PC-9 (cell line): ENCODE measurements at regions of chr18 and their contacts with region 1.

Region 1: DNA sequence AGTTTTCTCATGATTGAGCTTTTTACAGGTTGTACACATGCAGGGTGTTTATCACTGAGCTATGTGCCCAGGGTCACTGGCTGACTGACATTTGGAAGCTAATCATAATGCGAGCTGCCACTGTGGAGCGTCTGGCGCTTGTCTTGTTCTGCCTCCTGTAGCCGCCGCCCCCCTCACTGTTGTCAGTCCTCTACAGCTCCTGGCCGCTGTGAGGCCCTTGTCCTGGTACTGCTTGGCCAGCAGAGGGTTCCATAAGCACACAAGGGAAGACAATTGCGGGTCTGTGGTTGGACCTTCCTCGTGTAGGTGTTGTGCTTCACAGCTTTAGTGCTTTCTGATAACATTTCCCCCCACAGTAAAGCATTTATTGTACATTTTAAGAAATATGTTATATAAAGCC is 105.6 kb upstream of the LDLRAD4 start:
- DNase-seq: no peak
- H3K4me3 ChIP-seq: no peak overlapping the region
- H3K27ac ChIP-seq: no peak overlapping the region
- H3K4me1 ChIP-seq: no peaks in the 10 kb centered on the region
- H3K27me3 ChIP-seq: no peaks in the 10 kb centered on the region
- CTCF ChIP-seq: no peak

Region 2: DNA sequence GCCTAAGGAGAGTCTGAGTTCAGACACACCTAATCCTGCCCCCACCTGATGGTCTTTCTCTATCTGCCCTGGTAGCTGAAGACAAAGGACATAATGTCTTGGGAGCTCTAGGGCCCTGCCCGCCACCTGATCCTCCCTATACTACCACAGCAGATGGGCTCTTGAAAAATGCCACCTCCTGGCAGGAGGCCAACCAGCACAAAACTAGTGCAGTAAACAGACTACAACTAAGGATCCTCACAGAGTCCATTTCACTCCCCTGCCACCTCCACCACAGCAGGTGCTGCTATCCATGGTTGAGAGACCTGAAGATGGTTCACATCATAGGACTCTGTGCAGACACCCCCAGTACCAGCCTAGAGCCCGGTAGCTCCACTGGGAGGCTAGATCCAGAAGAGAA is 53.0 kb after region 1 on chr18:
- CTCF ChIA-PET with region 1: no interaction called
- POLR2A ChIA-PET with region 1: no interaction called
- intact Hi-C with region 1: loop called (anchors 10 kb)
- DNase-seq: no peak
- H3K4me3 ChIP-seq: no peak overlapping the region
- H3K27ac ChIP-seq: no peak overlapping the region
- H3K4me1 ChIP-seq: no peaks in the 10 kb centered on the region
- H3K27me3 ChIP-seq: peaks cover 23% of the 10 kb centered on the region
- CTCF ChIP-seq: no peak

Region 3: DNA sequence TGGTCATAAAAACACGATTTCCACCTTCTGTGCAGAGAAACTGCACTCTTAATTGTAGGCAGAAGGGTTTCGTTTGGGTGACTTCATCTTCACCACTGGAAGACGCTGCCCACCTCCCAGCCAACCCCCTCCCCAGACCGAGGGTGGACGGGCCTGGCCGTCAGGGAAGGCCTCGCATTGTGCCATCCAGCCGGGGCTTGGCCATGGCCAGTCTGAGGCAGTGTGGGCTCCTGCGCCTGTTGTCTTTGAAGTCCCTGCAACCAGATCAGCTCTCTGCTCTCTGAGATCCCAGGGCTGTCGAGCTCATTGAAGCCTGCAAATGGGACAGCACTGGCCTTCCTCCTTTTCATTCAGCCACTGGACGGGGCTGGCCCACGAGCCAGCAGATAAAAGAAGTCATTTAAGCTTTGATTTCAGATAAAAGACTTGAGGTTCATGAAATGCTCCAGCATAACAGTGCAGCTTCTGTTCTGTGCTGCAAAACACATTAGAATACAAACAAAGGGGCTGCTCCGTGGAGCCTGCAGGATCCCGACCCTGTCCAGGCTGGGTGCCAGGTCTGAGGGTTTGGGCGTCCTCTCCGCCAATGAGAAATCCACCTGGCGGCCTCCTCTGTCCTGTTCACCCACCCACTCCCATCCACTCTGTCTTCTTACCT is 359.1 kb after region 1 on chr18:
- CTCF ChIA-PET with region 1: no interaction called
- POLR2A ChIA-PET with region 1: no interaction called
- intact Hi-C with region 1: no loop called
- DNase-seq: no peak
- H3K4me3 ChIP-seq: no peak overlapping the region
- H3K27ac ChIP-seq: no peak overlapping the region
- H3K4me1 ChIP-seq: no peaks in the 10 kb centered on the region
- H3K27me3 ChIP-seq: peaks cover 58% of the 10 kb centered on the region
- CTCF ChIP-seq: no peak